GM13977 (cell line): ENCODE measurements at regions of chr1 and their contacts with region 1.

Region 1: DNA sequence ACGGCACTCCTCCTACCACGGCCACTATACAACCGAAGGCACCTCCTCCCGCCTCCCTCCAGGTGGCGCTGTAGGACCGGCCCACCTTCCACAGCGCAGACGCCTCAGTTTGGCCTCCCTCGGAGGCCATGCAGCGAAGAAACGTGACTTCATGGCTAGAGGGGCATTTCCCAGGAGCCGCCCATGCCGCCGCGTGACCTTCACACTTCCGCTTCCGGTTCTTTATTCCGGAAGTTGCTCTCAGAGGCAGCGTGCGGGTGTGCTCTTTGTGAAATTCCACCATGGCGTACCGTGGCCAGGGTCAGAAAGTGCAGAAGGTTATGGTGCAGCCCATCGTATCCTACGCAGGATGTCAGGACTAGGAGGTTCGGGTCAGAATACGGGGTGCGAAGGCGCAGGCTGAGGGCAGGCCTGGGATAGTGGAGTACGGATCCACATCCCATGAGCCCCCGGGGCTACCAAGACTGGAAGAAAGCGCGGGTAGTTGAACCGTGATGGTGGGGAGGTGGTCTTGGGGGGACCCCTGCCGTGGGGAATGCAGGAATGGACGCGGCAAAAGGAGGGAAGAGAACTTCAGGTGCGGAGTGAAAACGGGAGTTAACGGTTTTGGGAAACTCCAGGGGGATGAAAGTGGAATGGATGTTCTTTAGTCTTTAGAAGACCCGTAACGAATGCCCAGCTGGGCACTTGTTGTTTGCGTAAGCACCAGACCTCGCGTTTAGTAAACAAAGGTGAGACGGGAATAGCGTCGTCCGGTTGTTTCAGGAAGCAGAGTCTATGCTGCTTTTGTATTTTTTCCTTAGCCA is at the start of gene SNRPE:
- DNase-seq: peak; percentile 92
- CTCF ChIP-seq: peak; percentile 89

Region 2: DNA sequence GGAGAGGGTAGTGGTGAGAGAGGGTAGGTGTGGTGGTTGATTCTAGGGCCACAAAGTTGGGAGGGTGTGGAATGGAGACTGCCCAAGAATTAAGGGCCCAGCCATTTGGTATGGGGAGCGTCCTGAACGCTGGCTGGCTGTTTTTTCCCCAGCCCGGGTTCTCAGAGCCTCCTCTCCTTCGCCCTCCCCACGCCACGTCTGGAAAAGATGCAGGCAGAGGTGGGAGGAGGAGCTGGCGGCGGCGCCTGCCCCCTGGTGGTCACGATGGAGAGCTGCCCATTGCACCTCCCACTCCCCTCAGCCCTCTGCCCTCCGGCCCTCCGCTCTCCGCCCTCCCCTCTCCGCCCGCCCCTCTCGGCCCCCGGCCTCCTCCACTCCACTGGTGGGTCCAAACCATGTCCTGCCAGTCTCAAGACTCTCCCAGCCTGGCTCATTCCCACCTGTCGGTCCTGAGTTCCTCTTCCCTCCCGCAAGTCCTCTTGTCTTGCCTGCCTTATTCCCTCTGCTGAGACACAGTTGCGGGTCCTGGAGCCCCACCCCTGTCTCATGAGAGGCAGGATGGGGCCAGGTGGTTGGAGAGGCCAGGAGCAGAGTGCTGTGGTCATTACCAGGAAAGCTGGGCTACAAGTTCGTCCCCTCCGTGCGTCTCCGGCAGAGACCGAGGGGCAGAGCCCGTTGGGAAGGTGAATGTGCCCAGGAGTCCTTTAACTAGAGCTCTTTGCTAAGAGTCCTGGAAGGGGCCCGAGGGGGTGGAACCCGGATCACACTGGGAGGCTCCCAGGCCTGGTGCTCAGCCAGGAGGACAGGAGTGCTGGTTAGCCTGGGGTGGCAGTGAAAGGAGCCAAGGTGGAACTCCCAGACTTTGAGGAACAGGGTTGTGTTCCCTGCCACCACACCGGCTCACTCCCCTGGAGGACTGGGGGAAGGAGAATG is 267.6 kb after region 1 on chr1:
- in situ Hi-C with region 1: loop called (anchors 10 kb)
- DNase-seq: peak; percentile 92
- CTCF ChIP-seq: peak; percentile 90

Region 3: GRCh38 chr1:204151552-204152309 is 290.1 kb after region 1 on chr1 and contains the start of gene ETNK2:
- in situ Hi-C with region 1: no loop called
- DNase-seq: peak; percentile 71
- CTCF ChIP-seq: no peak

Region 4: GRCh38 chr1:204480515-204480914 is 618.9 kb after region 1 on chr1:
- in situ Hi-C with region 1: no loop called
- DNase-seq: peak; percentile 67
- CTCF ChIP-seq: peak; percentile 27